ENCODE measurements at regions of chr1 and their contacts with region 1.

Region 1: GRCh38 chr1:232579958-232580941 is 49.7 kb downstream of the SIPA1L2 start:
- DNase-seq: peak; percentile 64
- H3K4me3 Mint-ChIP-seq: no peak overlapping the region
- H3K27ac Mint-ChIP-seq: peak overlapping the region; percentile 69
- H3K4me1 Mint-ChIP-seq: peaks cover 49% of the 10 kb centered on the region
- H3K27me3 Mint-ChIP-seq: no peaks in the 10 kb centered on the region

Region 2: DNA sequence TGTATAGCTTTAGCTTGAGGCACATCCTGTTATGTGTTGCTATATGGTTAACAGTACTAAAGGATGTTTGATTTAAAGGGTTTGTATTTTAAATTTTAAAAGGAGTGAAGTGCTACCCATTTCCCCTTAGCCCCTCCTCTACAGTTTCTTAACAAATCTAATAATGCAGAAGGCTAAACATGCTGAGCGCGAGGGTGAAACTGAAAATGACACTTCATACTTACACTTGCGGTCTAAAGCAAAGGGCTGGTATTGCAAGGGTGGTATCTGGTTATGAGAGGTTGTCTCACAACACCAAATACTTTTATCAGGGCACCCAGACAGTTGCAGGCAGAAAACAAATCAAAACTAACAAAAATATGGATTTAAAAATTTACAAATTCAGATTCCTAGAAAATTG is 122.7 kb before region 1 on chr1:
- CTCF ChIA-PET with region 1: no interaction called
- POLR2A ChIA-PET with region 1: no interaction called
- intact Hi-C with region 1: loop called (anchors 2 kb)
- DNase-seq: peak; percentile 49
- H3K4me3 Mint-ChIP-seq: no peak overlapping the region
- H3K27ac Mint-ChIP-seq: no peak overlapping the region
- H3K4me1 Mint-ChIP-seq: peaks cover 8% of the 10 kb centered on the region
- H3K27me3 Mint-ChIP-seq: no peaks in the 10 kb centered on the region

Region 3: GRCh38 chr1:232599178-232600041 is 19.2 kb after region 1 on chr1:
- CTCF ChIA-PET with region 1: interaction called, 3 read pairs
- POLR2A ChIA-PET with region 1: interaction called, 3 read pairs
- intact Hi-C with region 1: loop called (anchors 1 kb)
- DNase-seq: no peak
- H3K4me3 Mint-ChIP-seq: no peak overlapping the region
- H3K27ac Mint-ChIP-seq: peak overlapping the region; percentile 21
- H3K4me1 Mint-ChIP-seq: peaks cover 36% of the 10 kb centered on the region
- H3K27me3 Mint-ChIP-seq: no peaks in the 10 kb centered on the region